HCT116 (cell line): ENCODE measurements at regions of chr5 and their contacts with region 1.

Region 1: DNA sequence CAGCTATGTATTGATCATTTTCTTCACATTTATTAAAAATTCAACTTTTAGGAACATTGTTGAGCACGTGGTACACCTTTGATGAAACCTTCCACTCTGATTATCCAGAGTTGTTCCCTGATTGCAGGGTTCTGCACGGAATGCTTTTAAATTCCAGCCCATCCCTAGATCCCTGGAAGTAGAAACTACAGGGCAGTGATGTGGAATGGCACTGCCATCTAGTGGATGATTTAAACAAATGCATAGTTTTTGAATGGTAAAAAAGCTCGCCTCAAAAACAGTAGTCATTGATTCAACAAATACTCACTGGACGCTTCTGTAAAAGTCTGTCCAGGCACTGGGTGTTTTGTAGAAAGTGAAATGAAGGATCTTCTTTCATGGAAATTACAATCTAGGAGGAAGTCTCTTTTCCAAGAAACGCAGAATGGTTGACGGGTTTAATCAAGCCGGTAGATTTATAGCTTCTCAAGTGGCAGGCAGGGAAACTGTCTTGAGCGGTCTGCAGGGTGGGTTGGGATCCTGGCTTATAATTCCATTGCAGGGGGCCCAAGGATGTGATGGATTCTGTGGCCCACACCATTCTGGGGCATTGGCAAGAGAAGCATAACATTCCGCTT is 118.4 kb downstream of the ARHGAP26 start:
- DNase-seq: no peak
- ATAC-seq: peak; percentile 78
- H3K4me3 ChIP-seq: no peak overlapping the region
- H3K27ac ChIP-seq: no peak overlapping the region
- H3K4me1 ChIP-seq: peaks cover 6 to 10% of the 10 kb centered on the region in 2 experiments; a peak in 1 of 4 replicates
- H3K27me3 ChIP-seq: no peaks in the 10 kb centered on the region
- CTCF ChIP-seq: peak; percentile 59 to 84 (median 80)
- POLR2A ChIP-seq: no peak
- RAD21 ChIP-seq: peak; percentile 82

Region 2: GRCh38 chr5:142874537-142874936 is 14.0 kb before region 1 on chr5:
- CTCF ChIA-PET with region 1: interaction called, 21 read pairs
- POLR2A ChIA-PET with region 1: interaction called, 4 read pairs
- RAD21 ChIA-PET with region 1: no interaction called
- intact Hi-C with region 1: no loop called
- DNase-seq: no peak
- ATAC-seq: no peak
- H3K4me3 ChIP-seq: no peak overlapping the region
- H3K27ac ChIP-seq: no peak overlapping the region
- H3K4me1 ChIP-seq: peaks cover 52 to 61% of the 10 kb centered on the region in 2 experiments; a peak in 3 of 4 replicates
- H3K27me3 ChIP-seq: no peaks in the 10 kb centered on the region
- CTCF ChIP-seq: no peak
- POLR2A ChIP-seq: no peak
- RAD21 ChIP-seq: no peak

Region 3: DNA sequence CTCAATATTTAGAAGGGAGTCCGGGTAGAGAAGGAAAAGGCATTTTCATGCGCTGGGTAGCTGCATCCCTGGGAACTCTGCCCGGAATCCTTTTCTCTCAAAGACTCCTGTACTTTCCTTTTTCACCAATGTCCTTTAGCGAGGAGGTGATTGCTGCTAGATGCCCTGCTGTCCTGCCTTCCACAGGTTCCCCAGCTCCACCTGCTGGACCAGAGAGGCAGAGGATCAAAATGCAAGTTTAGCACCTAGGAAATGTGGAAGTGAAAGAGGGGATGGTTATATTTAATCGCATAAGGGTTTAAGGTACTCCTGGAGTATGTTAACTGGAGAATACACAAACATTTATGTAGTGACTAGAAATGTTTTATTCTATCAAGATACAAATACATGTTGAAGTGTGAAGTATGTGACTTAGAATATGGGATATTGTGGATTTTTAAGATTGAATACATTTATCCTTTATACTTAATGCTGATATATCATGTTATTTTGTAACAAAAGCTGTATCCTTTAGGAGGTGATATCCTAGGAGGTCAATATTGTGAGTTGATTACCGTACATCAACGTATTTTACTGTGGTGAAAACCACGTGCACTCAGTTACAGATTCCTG is 27.3 kb after region 1 on chr5:
- CTCF ChIA-PET with region 1: interaction called, 10 read pairs
- POLR2A ChIA-PET with region 1: no interaction called
- RAD21 ChIA-PET with region 1: interaction called in 1 of 2 experiments, 4 read pairs
- intact Hi-C with region 1: no loop called
- DNase-seq: no peak
- ATAC-seq: peak; percentile 87
- H3K4me3 ChIP-seq: no peak overlapping the region
- H3K27ac ChIP-seq: no peak overlapping the region
- H3K4me1 ChIP-seq: peaks cover 15% of the 10 kb centered on the region in 2 experiments; a peak in 3 of 4 replicates
- H3K27me3 ChIP-seq: no peaks in the 10 kb centered on the region
- CTCF ChIP-seq: peak; percentile 73 to 84 (median 75); a peak in 5 of 6 replicates
- POLR2A ChIP-seq: no peak
- RAD21 ChIP-seq: peak; percentile 75

Region 4: DNA sequence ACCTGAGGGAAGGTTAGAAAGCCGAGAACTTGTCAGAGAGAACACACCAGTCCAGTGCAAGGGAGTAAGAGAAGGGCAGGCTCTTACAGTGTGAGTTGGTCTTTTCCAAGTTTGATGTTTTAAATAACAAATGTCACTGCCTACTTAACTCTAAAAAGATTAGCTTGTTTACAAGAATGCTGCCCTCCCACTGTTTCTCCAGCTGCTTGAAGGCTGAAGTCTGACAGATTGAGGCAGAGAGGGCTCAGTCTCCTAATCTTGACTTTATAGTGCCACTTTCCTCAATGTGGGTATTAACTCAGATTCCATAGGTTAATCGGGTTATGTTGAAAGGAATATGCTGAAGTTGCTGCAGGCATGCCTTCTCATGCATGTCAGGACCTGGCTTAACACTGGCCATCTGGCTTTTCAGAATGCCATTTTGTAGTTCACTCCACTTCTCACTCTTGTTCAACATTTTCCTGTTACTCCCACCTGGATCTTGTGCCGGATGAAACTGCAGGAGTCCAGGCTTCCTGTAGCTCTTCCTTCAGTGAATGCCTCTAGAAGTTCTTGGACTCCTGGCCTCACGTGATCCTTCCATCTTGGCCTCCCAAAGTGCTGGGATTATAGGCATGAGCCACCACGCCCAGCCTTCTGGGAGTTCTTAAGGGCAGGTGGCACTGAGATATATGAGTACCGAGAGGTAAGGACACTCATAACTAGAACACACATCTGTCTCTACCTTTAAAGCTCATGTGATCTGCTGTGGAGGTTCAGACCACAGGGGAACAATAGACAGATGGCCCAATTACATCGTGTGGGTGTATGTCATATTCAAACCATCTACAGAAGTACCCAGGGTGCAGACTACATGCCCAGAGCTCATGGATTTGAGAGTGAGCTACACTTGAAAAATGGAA is 131.3 kb after region 1 on chr5:
- CTCF ChIA-PET with region 1: no interaction called
- POLR2A ChIA-PET with region 1: no interaction called
- RAD21 ChIA-PET with region 1: no interaction called
- intact Hi-C with region 1: no loop called
- DNase-seq: no peak
- ATAC-seq: no peak
- H3K4me3 ChIP-seq: no peak overlapping the region
- H3K27ac ChIP-seq: no peak overlapping the region
- H3K4me1 ChIP-seq: no peaks in the 10 kb centered on the region
- H3K27me3 ChIP-seq: no peaks in the 10 kb centered on the region
- CTCF ChIP-seq: no peak
- POLR2A ChIP-seq: no peak
- RAD21 ChIP-seq: no peak